ENCODE measurements at regions of chr1 and their contacts with region 1.

Region 1: GRCh38 chr1:224127925-224128819 is 14.3 kb downstream of the FBXO28 start:
- DNase-seq: no peak
- ATAC-seq: no peak
- H3K4me3 ChIP-seq: no peak overlapping the region
- H3K27ac ChIP-seq: no peak overlapping the region
- H3K4me1 ChIP-seq: peaks cover 0 to 2% of the 10 kb centered on the region in 2 donors
- H3K27me3 ChIP-seq: no peaks in the 10 kb centered on the region

Region 2: GRCh38 chr1:224014330-224014649 is 113.9 kb before region 1 on chr1:
- intact Hi-C with region 1: no loop called
- DNase-seq: no peak
- ATAC-seq: no peak
- H3K4me3 ChIP-seq: no peak overlapping the region
- H3K27ac ChIP-seq: no peak overlapping the region
- H3K4me1 ChIP-seq: no peaks in the 10 kb centered on the region
- H3K27me3 ChIP-seq: no peaks in the 10 kb centered on the region

Region 3: DNA sequence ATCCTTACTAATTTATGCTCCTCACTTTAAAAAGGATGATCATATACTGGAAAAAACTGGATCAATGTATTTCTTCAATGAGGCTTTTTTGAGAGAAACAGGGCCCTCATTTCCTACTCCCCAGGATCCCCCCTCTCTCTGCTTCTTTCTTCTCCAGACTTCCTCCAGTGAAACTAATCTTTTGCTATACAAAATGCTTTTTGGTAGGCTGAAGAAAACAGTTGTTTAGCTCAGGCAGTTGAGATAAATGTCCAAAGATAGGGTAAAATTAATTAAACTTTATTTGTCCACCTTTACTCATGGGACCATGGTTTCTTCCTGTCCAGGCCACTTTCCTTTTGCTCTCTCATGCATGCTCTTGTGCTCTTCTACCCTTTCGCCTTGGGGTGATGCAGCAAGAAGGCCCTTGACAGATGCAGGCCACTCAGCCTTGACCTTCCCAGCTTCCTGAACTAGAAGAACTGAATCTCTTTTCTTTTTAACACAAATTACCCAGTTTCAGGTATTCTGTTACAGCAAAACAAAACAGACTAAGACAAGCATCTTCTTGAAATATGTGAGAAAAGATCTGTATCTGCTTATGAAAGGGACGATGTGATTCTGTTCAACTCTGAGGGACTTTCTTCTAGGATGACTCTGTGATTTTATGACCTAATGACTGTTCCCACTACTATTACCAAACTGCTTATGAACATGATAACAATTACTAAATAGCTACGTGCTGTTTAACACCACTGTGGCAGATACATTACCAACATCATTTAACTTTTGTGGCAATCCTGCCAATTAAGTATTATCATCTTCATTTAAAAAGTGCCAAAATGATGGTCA is 138.1 kb after region 1 on chr1:
- intact Hi-C with region 1: loop called in 1 of 2 experiments (anchors 10 kb)
- DNase-seq: no peak
- ATAC-seq: no peak
- H3K4me3 ChIP-seq: no peak overlapping the region
- H3K27ac ChIP-seq: no peak overlapping the region
- H3K4me1 ChIP-seq: no peaks in the 10 kb centered on the region
- H3K27me3 ChIP-seq: no peaks in the 10 kb centered on the region

Region 4: GRCh38 chr1:224454397-224455066 is 326.4 kb after region 1 on chr1:
- intact Hi-C with region 1: no loop called
- DNase-seq: no peak
- ATAC-seq: no peak
- H3K4me3 ChIP-seq: no peak overlapping the region
- H3K27ac ChIP-seq: no peak overlapping the region
- H3K4me1 ChIP-seq: no peaks in the 10 kb centered on the region
- H3K27me3 ChIP-seq: no peaks in the 10 kb centered on the region